ENCODE measurements at regions of chr2 and their contacts with region 1.

Region 1: DNA sequence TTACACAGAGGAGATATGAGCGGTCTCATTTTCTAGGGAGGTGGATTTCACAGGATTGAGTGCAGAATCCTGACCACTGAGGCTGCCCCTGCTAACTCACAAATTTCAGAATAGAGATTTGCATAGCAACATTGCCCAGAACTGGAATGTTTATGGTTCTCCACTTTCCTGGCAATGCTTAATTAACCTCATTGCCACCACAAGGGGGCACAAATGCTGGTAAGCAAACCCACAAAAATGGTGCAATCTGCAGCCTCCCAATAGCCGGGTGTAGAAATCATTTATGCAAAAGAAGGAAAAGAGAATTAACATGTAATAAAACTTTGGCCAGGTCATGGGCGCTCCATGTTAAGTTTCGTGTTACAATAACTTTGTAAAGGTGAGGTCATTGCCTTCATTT is 112.4 kb downstream of the CYRIA start:
- DNase-seq: no peak
- ATAC-seq: peak in 3 of 4 donors; percentile 42 to 86 (median 63)
- H3K4me3 ChIP-seq: no peak overlapping the region
- H3K27ac ChIP-seq: no peak overlapping the region
- H3K4me1 ChIP-seq: peaks cover 4% of the 10 kb centered on the region
- H3K27me3 ChIP-seq: no peaks in the 10 kb centered on the region
- CTCF ChIP-seq: peak; percentile 61

Region 2: GRCh38 chr2:16608661-16609643 is 55.7 kb after region 1 on chr2:
- intact Hi-C with region 1: loop called (anchors 1 to 2 kb)
- DNase-seq: peak; percentile 81 to 90
- ATAC-seq: peak; percentile 89 to 94 (median 92)
- H3K4me3 ChIP-seq: peak overlapping the region; percentile 44
- H3K27ac ChIP-seq: peak overlapping the region; percentile 1
- H3K4me1 ChIP-seq: peaks cover 6% of the 10 kb centered on the region
- H3K27me3 ChIP-seq: no peaks in the 10 kb centered on the region
- CTCF ChIP-seq: peak; percentile 99

Region 3: DNA sequence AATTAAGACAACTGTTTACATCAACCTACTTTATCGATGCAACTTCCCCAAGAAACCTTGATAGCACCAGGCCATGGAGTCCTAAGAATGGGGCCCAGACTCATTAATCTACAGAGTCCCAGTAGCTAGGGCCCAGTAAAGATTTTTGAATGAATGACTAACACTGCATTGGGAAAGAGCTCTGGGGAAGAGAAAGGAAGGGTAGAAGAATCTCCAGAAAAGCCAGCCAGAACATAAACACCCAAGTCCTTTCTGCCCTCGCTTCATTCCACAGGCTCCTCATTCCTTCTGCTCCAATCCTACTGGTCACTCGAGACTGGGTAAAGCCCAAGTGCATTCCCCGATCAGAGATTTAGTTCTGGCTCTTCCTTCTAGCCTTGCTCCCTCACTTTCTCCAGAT is 68.1 kb after region 1 on chr2:
- intact Hi-C with region 1: no loop called
- DNase-seq: no peak
- ATAC-seq: no peak
- H3K4me3 ChIP-seq: no peak overlapping the region
- H3K27ac ChIP-seq: no peak overlapping the region
- H3K4me1 ChIP-seq: peaks cover 47% of the 10 kb centered on the region
- H3K27me3 ChIP-seq: no peaks in the 10 kb centered on the region
- CTCF ChIP-seq: no peak

Measured in psoas muscle (tissue), 8 donors.